Calu3 (cell line): ENCODE measurements at regions of chr3 and their contacts with region 1.

Region 1: DNA sequence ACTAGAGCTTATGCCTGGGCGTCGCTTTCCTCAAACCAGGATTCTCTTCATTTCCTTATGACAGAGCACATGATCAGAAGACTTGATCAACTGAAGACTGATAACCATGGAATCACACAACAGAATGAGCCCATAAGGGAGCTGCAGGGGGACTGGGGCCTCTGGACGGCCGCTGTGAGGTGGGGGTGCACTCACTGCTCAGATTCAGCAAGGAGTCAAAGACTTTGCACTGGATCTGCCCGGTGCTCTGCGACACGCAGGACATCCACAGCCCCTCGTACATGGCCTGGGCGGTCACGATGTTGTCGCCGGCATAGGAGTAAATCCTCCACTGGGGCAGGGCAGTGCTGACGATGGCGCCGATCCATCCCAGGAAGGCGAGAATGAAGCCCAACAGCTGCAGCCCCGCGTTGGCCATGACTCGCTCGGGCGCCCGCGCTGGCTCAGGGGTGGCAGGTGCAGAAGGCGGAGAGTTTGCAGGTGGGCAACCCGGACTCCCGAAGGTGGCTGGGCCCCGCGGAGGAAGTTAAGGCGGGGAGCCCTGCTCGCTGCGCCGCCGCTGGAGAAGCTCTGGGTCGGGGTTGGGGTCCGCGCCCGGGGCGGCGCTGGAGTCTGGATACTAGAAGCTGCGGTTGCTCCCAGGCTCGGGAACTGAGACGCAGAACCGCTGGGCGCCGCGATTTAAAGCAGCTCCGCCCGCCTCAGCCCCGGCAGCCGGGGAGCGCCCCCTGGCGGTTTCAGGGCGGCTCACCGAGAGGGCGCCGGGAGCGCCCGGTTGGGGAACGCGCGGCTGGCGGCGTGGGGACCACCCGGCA is at the start of gene CLDN1:
- DNase-seq: peak; percentile 98
- H3K4me3 Mint-ChIP-seq: peak within 1 kb of the TSS; percentile 81
- H3K27ac Mint-ChIP-seq: peak within 1 kb of the TSS; percentile 89
- H3K4me1 Mint-ChIP-seq: peaks cover 45% of the 10 kb centered on the region
- H3K27me3 Mint-ChIP-seq: no peaks in the 10 kb centered on the region
- CTCF ChIP-seq: peak; percentile 99
- total RNA-seq, gene CLDN1: 204 and 253 TPM in 2 replicates

Region 2: DNA sequence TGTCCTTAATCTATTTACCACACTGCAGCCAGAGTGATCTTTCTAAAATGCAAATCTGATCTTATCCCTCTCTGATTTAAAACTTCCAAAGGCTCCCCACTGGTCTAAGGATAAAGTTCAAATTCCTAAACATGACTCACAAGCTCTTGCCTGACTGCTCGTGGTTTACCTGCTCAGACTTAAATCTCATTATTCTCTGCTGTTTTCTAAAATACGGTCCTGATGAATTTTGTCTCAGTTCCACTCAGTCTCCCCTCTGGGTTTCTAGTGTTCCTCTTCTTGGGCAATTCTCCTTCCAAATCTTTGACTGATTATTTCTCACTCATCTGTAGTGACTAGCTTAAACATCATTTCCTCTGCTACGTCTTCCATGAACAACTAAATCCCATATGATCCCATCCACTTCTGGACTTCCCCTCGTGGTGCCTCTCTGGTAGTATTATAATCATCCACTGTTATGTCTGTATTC is 309.6 kb before region 1 on chr3:
- CTCF ChIA-PET with region 1: interaction called, 4 read pairs
- intact Hi-C with region 1: loop called (anchors 2 kb)
- DNase-seq: peak; percentile 25
- H3K4me3 Mint-ChIP-seq: peak overlapping the region; percentile 53
- H3K27ac Mint-ChIP-seq: peak overlapping the region; percentile 58
- H3K4me1 Mint-ChIP-seq: peaks cover 49% of the 10 kb centered on the region
- H3K27me3 Mint-ChIP-seq: no peaks in the 10 kb centered on the region
- CTCF ChIP-seq: no peak

Region 3: DNA sequence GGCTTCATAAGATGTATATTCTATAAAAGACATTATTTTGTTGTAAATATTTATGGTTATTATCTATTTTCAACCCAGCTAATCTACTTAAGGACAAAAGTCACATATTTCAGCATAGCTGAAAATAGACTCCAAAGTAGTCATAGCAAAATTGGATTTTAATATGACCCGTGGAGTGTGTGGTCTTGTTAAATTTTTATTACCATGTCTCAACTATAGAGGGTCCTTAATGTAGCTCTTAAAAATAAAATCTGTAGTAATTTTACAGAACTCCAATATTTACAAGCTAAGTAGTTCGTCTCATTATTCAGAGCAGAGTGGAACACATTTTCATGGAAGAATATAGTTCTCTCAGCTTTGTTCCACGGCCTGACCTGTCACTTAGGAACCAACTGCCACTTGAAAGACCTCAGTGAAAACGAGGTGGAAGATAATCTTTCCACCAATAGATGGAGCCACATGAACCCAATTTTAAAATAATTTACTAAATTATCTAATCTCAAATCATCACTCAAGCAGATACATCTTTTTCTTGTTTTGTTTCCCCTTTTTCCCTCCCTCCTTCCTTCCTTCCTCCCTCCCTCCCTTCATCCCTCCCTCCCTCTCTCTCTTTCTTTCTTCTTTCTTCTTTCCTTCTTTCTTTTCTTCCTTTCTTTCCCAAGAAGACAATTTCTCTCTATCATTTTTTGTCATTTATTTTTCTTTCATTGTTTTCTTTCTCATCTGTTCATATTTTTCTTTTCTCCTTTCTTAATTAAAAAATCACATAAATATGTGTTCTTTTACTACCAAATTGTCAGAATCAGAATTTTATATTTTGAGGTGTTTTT is 96.9 kb before region 1 on chr3:
- CTCF ChIA-PET with region 1: interaction called, 31 read pairs
- intact Hi-C with region 1: loop called (anchors 1 kb)
- DNase-seq: peak; percentile 37
- H3K4me3 Mint-ChIP-seq: no peak overlapping the region
- H3K27ac Mint-ChIP-seq: no peak overlapping the region
- H3K4me1 Mint-ChIP-seq: peaks cover 7% of the 10 kb centered on the region
- H3K27me3 Mint-ChIP-seq: no peaks in the 10 kb centered on the region
- CTCF ChIP-seq: peak; percentile 58

Region 4: GRCh38 chr3:190339130-190339529 is 17.1 kb after region 1 on chr3:
- CTCF ChIA-PET with region 1: interaction called, 37 read pairs
- intact Hi-C with region 1: no loop called
- DNase-seq: no peak
- H3K4me3 Mint-ChIP-seq: no peak overlapping the region
- H3K27ac Mint-ChIP-seq: peak overlapping the region; percentile 12
- H3K4me1 Mint-ChIP-seq: peaks cover 42% of the 10 kb centered on the region
- H3K27me3 Mint-ChIP-seq: no peaks in the 10 kb centered on the region
- CTCF ChIP-seq: peak; percentile 69

Region 5: GRCh38 chr3:190378240-190378891 is 56.4 kb after region 1 on chr3:
- CTCF ChIA-PET with region 1: interaction called, 71 read pairs
- intact Hi-C with region 1: loop called (anchors 2 kb)
- DNase-seq: no peak
- H3K4me3 Mint-ChIP-seq: no peak overlapping the region
- H3K27ac Mint-ChIP-seq: no peak overlapping the region
- H3K4me1 Mint-ChIP-seq: peaks cover 83% of the 10 kb centered on the region
- H3K27me3 Mint-ChIP-seq: no peaks in the 10 kb centered on the region
- CTCF ChIP-seq: no peak

Region 6: GRCh38 chr3:190443257-190443656 is 121.3 kb after region 1 on chr3:
- CTCF ChIA-PET with region 1: interaction called, 14 read pairs
- intact Hi-C with region 1: loop called (anchors 5 kb)
- DNase-seq: peak; percentile 48
- H3K4me3 Mint-ChIP-seq: no peak overlapping the region
- H3K27ac Mint-ChIP-seq: peak overlapping the region; percentile 44
- H3K4me1 Mint-ChIP-seq: peaks cover 47% of the 10 kb centered on the region
- H3K27me3 Mint-ChIP-seq: no peaks in the 10 kb centered on the region
- CTCF ChIP-seq: peak; percentile 64